Activated T-helper 2 cell treated with anti-CD3 and anti-CD28 coated beads, Interferon-gamma antibody, Interleukin-2, Interleukin-4, amounts not matched to agents 10 μg/mL and 5 μg/mL and 100 μg/mL, durations not matched to agents 14 hours and 24 hours and 36 hours (primary cell): ENCODE measurements at regions of chr19 and their contacts with region 1.

Region 1: GRCh38 chr19:53467485-53468262 is at the start of gene ZNF813:
- DNase-seq: peak; percentile 87
- H3K4me3 Mint-ChIP-seq: peak within 1 kb of the TSS; percentile 85
- H3K27ac Mint-ChIP-seq: peak within 1 kb of the TSS; percentile 76
- H3K4me1 Mint-ChIP-seq: peaks cover 12% of the 10 kb centered on the region
- H3K27me3 Mint-ChIP-seq: no peaks in the 10 kb centered on the region
- total RNA-seq, gene ZNF813: 3.4 TPM in 2 replicates

Region 2: DNA sequence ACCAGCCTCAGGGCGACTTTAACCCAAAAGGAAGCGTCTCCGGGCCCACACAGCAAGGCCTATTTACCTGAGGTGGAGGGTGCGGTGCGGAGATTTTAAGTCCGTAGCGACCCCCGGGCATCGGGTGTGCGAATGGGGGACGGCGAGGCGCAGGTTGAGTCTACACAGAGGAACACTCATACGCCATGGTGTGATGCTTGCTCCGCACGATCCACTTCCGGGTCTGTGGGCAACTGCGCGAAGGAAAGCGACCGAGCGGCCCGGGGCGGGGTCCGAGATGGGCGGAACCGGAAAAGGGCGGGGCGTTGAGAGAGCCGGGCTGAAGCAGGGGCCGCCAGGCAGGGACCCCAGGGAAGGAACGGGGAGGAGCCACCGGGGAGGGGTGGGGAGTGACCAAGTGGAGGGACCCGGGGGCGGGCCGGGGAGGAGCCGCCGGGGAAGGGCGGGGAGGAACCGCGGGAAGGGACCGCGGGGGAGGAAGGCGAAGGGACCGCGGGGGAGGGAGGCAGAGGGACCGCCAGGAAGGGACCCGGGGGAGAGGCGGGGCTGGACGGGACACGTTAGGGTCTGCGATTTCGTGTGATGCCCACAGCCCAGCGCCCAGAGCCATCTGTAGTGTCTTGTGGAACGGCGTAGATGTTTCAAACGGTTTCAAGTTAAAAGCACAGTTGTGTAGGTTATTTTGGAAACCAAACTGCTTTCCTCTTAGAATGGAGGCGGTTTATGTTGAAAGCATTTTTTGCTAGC is 364.3 kb before region 1 on chr19 and contains the start of gene ZNF160:
- intact Hi-C with region 1: loop called (anchors 2 kb)
- DNase-seq: peak; percentile 99
- H3K4me3 Mint-ChIP-seq: peak within 1 kb of the TSS; percentile 87
- H3K27ac Mint-ChIP-seq: peak within 1 kb of the TSS; percentile 84
- H3K4me1 Mint-ChIP-seq: peaks cover 19% of the 10 kb centered on the region
- H3K27me3 Mint-ChIP-seq: no peaks in the 10 kb centered on the region
- total RNA-seq, gene ZNF160: 35.3 and 39.3 TPM in 2 replicates

Region 3: GRCh38 chr19:53431399-53432087 is 36.1 kb before region 1 on chr19 and contains the start of gene ZNF761:
- intact Hi-C with region 1: loop called (anchors 5 kb)
- DNase-seq: peak; percentile 96
- H3K4me3 Mint-ChIP-seq: peak within 1 kb of the TSS; percentile 94
- H3K27ac Mint-ChIP-seq: peak within 1 kb of the TSS; percentile 87
- H3K4me1 Mint-ChIP-seq: peaks cover 14% of the 10 kb centered on the region
- H3K27me3 Mint-ChIP-seq: no peaks in the 10 kb centered on the region
- total RNA-seq, gene ZNF761: 12.1 and 12.2 TPM in 2 replicates